ENCODE measurements at regions of chr7 and their contacts with region 1.

Region 1: DNA sequence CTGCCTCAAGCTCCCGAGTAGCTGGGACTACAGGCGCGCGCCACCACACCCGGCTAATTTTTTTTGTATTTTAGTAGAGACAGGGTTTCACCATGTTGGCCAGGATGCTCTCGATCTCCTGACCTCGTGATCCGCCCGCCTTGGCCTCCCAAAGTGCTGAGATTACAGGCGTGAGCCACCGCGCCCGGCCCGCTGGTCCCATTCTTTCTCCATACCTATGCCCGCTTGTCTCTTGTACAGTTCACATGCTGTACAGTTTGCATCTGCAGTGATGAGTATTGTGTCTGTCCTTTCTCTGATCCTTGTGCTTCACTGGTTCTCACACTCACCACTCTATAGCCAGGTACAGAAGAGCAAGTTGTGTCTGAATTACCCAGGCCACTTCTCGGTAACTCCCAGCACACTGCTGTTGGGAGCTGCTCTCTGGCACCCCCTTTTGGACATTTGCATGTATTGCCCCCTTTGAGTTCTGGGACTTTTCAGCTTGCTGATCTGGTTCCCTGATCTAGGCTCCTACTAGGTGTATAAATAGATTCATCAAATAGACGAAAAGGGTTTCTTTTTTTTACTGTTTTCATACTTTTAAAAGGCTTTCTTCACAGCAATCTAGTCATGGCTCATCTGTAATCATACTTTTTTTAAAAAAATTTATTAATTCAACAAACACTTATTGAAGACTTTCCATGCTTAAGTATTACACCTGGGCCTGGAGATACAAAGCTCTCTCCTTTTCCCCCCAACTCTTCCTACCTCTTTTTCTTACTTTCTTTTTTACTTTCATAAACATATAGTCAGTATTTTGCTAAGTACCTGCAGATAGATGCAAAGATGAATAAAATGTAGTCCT is 53.5 kb downstream of the AOAH start:
- DNase-seq: peak; percentile 75
- ATAC-seq: peak; percentile 93
- H3K4me3 Mint-ChIP-seq: no peak overlapping the region
- H3K27ac Mint-ChIP-seq: no peak overlapping the region
- H3K4me1 Mint-ChIP-seq: peaks cover 13% of the 10 kb centered on the region
- H3K27me3 Mint-ChIP-seq: no peaks in the 10 kb centered on the region
- CTCF ChIP-seq: peak; percentile 91

Region 2: DNA sequence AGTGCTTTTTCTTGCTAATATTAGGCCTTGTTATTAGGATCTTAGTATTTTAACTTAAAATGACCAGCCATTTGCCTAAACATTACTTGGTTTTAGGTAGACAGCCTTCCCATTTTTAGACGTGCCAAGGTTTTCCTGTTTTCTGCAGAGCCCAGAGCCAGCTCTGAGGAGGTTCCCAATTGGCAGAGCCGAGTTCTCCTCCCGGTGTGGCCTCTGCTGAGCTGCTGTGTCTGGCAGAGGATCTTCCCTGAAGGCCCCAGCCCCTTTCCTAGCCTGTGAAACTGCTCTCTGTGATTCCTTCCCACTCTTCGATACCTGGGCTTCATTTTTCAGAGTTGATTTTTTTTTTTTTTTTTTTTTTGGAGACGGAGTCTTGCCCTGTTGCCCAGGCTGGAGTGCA is 426.4 kb before region 1 on chr7:
- CTCF ChIA-PET with region 1: no interaction called
- POLR2A ChIA-PET with region 1: no interaction called
- DNase-seq: no peak
- ATAC-seq: no peak
- H3K4me3 Mint-ChIP-seq: no peak overlapping the region
- H3K27ac Mint-ChIP-seq: peak overlapping the region; percentile 33
- H3K4me1 Mint-ChIP-seq: peaks cover 27% of the 10 kb centered on the region
- H3K27me3 Mint-ChIP-seq: no peaks in the 10 kb centered on the region
- CTCF ChIP-seq: no peak

Region 3: GRCh38 chr7:36473454-36474282 is 197.1 kb before region 1 on chr7:
- CTCF ChIA-PET with region 1: interaction called, 24 read pairs
- POLR2A ChIA-PET with region 1: no interaction called
- DNase-seq: peak; percentile 79
- ATAC-seq: peak; percentile 89
- H3K4me3 Mint-ChIP-seq: no peak overlapping the region
- H3K27ac Mint-ChIP-seq: no peak overlapping the region
- H3K4me1 Mint-ChIP-seq: no peaks in the 10 kb centered on the region
- H3K27me3 Mint-ChIP-seq: no peaks in the 10 kb centered on the region
- CTCF ChIP-seq: peak; percentile 59

Region 4: GRCh38 chr7:36509962-36510361 is 160.8 kb before region 1 on chr7:
- CTCF ChIA-PET with region 1: interaction called, 14 read pairs
- POLR2A ChIA-PET with region 1: no interaction called
- DNase-seq: no peak
- ATAC-seq: peak; percentile 87
- H3K4me3 Mint-ChIP-seq: no peak overlapping the region
- H3K27ac Mint-ChIP-seq: no peak overlapping the region
- H3K4me1 Mint-ChIP-seq: peaks cover 7% of the 10 kb centered on the region
- H3K27me3 Mint-ChIP-seq: peaks cover 3% of the 10 kb centered on the region; the same call in 1 of the 2 replicates
- CTCF ChIP-seq: no peak

Region 5: GRCh38 chr7:36653008-36653670 is 17.7 kb before region 1 on chr7:
- CTCF ChIA-PET with region 1: interaction called, 41 read pairs
- POLR2A ChIA-PET with region 1: no interaction called
- DNase-seq: no peak
- ATAC-seq: 0 out of 2 replicates have a peak, but pooled peaks have one; percentile 8
- H3K4me3 Mint-ChIP-seq: 0 out of 2 replicates have a peak overlapping the region, but pooled peaks have one; percentile 26
- H3K27ac Mint-ChIP-seq: peak overlapping the region; percentile 97; the same call in 1 of the 2 replicates
- H3K4me1 Mint-ChIP-seq: peaks cover 65% of the 10 kb centered on the region
- H3K27me3 Mint-ChIP-seq: peaks cover 4% of the 10 kb centered on the region; the same call in 1 of the 2 replicates
- CTCF ChIP-seq: no peak

Region 6: GRCh38 chr7:36683695-36684357 is 13.0 kb after region 1 on chr7:
- CTCF ChIA-PET with region 1: interaction called, 39 read pairs
- POLR2A ChIA-PET with region 1: no interaction called
- DNase-seq: no peak
- ATAC-seq: no peak
- H3K4me3 Mint-ChIP-seq: no peak overlapping the region
- H3K27ac Mint-ChIP-seq: no peak overlapping the region
- H3K4me1 Mint-ChIP-seq: no peaks in the 10 kb centered on the region
- H3K27me3 Mint-ChIP-seq: no peaks in the 10 kb centered on the region
- CTCF ChIP-seq: no peak

Region 7: GRCh38 chr7:36863901-36864701 is 193.3 kb after region 1 on chr7:
- CTCF ChIA-PET with region 1: no interaction called
- POLR2A ChIA-PET with region 1: no interaction called
- DNase-seq: no peak
- ATAC-seq: no peak
- H3K4me3 Mint-ChIP-seq: no peak overlapping the region
- H3K27ac Mint-ChIP-seq: no peak overlapping the region
- H3K4me1 Mint-ChIP-seq: peaks cover 10% of the 10 kb centered on the region
- H3K27me3 Mint-ChIP-seq: no peaks in the 10 kb centered on the region
- CTCF ChIP-seq: no peak

Measured in WTC11 (cell line).